ENCODE measurements at regions of chr2 and their contacts with region 1.

Region 1: DNA sequence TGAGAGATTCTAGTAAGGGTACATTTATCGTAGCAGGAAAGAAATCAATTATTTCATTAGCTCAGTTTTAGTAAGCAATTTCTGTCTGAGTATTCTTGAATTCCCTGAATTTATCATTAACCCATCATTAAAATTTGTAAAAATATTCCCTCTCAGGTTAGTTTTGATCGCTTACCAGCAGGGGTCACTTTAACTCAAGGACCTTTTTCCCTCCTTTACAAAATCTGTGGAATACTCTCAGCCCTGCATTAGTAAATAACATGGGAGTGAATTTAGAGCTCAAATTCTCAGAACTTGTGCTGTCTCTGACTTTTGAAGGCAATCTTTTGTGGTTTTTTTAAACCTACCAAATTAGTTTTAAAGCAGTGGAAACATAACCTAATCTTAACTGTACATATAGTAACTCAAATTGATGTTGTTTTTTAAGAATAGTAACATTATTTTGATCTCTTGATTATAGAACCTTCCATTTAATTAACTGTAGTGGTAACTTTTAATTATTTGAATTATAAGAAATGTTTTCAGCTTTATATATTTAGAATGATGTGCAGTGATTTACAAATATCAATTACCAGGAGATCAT is 97.2 kb downstream of the AGPS start:
- DNase-seq: peak; percentile 15 to 42
- ATAC-seq: peak in 1 of 2 experiments; percentile 75; a peak in 3 of 6 replicates
- H3K4me3 ChIP-seq: no peak overlapping the region
- H3K27ac ChIP-seq: no peak overlapping the region
- H3K4me1 ChIP-seq: no peaks in the 10 kb centered on the region
- CTCF ChIP-seq: peak; percentile 75
- EP300 ChIP-seq: no peak
- POLR2A ChIP-seq: no peak
- RAD21 ChIP-seq: peak; percentile 56

Region 2: DNA sequence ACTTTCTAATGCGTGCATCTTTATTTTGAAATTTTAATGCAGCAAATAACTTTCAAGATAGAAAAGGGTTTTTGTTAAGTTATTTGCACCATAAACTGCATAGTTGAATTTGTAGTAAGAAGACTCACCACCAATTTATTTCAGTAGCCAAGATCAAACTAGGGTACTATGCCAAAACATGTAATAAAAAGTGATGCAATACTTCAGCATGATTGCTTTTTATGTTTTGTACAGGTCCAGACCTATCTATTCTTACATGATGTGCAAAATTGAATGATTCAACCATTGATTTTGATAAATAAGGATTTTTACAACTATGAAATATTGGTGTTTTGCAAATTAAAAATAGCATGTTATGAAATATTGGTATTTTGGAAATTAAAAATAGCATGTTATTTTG is 70.5 kb before region 1 on chr2:
- CTCF ChIA-PET with region 1: no interaction called
- POLR2A ChIA-PET with region 1: no interaction called
- DNase-seq: no peak
- ATAC-seq: no peak
- H3K4me3 ChIP-seq: no peak overlapping the region
- H3K27ac ChIP-seq: peak overlapping the region; percentile 35 to 63; a peak in 4 of 6 replicates
- H3K4me1 ChIP-seq: peaks cover 62% of the 10 kb centered on the region
- CTCF ChIP-seq: no peak
- EP300 ChIP-seq: no peak
- POLR2A ChIP-seq: no peak
- RAD21 ChIP-seq: no peak

Region 3: DNA sequence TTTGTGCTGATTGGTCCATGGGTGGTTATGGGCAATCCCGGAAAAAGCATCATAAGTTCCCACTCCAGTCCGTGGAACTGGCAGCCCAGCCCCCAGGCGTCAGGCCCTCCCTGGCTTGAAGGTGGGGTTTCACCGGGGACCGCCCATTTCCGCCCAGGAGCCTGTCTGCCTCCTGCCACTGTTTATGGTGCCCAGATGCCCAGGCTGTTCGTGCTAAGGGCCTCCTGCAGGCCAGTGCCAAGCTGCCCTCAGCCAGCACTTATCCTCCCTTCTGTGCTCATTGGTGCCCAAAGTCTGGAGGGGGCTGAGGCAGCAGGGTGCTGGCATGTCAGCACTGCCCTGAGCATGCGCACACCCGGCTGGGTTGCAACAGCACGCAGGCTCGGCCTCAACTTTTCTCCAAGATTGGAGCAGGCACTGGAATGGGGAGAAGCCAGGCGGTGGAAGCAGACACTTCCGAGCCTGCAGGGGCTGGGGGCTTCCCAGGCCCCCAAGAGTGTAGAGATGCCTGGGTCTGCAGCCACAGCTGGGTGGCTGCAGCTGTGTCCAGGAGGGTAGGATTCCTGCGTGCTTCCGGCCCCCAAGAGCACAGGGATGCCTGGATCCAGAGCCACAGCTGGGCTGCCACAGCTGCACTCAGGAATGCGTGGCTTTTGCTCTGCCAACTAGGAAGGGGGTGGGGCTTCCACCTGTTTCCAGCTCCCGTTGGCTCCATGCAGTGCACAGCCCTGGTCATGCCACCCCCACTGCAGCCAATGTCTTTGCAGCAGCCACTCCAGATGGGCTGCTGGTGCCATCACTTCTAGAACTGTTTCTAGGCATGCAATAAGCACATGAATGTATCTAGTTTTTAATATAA is 23.2 kb before region 1 on chr2:
- CTCF ChIA-PET with region 1: interaction called, 10 read pairs
- POLR2A ChIA-PET with region 1: no interaction called
- DNase-seq: no peak
- ATAC-seq: peak; percentile 52 to 68; a peak in 4 of 6 replicates
- H3K4me3 ChIP-seq: no peak overlapping the region
- H3K27ac ChIP-seq: no peak overlapping the region
- H3K4me1 ChIP-seq: 0 out of 3 replicates have a peak, but pooled peaks cover 4% of the 10 kb centered on the region
- CTCF ChIP-seq: no peak
- EP300 ChIP-seq: no peak
- POLR2A ChIP-seq: no peak
- RAD21 ChIP-seq: no peak